ENCODE measurements at regions of chr10 and their contacts with region 1.

Region 1: GRCh38 chr10:70221030-70221429 is 12.2 kb downstream of the PPA1 start:
- DNase-seq: no peak
- H3K4me3 Mint-ChIP-seq: peak overlapping the region; percentile 7
- H3K27ac Mint-ChIP-seq: peak overlapping the region; percentile 68
- H3K4me1 Mint-ChIP-seq: peaks cover 23% of the 10 kb centered on the region
- H3K27me3 Mint-ChIP-seq: no peaks in the 10 kb centered on the region

Region 2: GRCh38 chr10:70074165-70074564 is 146.9 kb before region 1 on chr10:
- CTCF ChIA-PET with region 1: no interaction called
- POLR2A ChIA-PET with region 1: no interaction called
- DNase-seq: no peak
- H3K4me3 Mint-ChIP-seq: no peak overlapping the region
- H3K27ac Mint-ChIP-seq: no peak overlapping the region
- H3K4me1 Mint-ChIP-seq: no peaks in the 10 kb centered on the region
- H3K27me3 Mint-ChIP-seq: peaks cover 2% of the 10 kb centered on the region

Region 3: DNA sequence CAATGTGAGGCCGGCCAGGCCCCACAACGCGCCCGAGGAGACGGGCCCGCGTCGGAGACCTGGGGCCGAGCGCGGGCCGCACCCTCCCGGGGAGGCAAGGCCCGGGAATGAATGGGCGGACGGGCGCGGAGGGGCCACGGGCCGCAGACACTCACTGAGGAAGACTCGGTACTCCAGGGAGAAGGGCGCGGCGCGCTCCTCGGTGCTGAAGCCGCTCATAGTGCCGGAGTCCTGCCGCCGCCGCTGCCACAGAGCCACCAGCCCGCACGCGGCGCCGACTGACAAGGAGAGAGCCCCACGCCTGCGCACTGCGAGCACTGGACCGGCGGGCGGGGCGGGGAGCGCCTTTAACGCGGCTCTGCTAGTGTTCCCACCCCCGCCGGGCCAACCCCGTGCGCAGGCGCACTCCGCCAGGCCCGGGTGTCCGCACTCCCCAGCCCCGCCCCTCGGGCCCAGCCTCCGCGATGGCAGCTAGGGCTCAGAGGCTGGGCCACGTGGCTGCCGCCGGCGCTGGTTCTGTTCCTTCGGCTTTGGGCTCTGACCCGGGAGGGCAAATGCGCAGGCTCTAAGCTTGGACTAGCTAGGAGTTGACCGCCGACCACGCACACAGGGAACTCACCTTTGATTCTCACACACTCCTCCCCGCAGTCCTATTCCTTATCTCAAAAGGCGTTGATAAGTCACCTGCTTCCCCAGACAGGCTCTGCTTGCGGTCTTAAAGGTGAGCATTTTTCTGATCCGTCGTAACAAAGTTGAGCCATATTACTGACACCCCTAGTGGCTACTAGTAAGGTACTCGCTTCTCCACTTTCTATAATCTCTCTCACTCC is 12.3 kb after region 1 on chr10 and contains the start of gene PPA1:
- CTCF ChIA-PET with region 1: interaction called, 23 read pairs
- POLR2A ChIA-PET with region 1: no interaction called
- DNase-seq: peak; percentile 99
- H3K4me3 Mint-ChIP-seq: peak within 1 kb of the TSS; percentile 75
- H3K27ac Mint-ChIP-seq: peak within 1 kb of the TSS; percentile 92
- H3K4me1 Mint-ChIP-seq: peaks cover 46% of the 10 kb centered on the region
- H3K27me3 Mint-ChIP-seq: no peaks in the 10 kb centered on the region
- total RNA-seq, gene PPA1: 124 to 132 TPM

Region 4: DNA sequence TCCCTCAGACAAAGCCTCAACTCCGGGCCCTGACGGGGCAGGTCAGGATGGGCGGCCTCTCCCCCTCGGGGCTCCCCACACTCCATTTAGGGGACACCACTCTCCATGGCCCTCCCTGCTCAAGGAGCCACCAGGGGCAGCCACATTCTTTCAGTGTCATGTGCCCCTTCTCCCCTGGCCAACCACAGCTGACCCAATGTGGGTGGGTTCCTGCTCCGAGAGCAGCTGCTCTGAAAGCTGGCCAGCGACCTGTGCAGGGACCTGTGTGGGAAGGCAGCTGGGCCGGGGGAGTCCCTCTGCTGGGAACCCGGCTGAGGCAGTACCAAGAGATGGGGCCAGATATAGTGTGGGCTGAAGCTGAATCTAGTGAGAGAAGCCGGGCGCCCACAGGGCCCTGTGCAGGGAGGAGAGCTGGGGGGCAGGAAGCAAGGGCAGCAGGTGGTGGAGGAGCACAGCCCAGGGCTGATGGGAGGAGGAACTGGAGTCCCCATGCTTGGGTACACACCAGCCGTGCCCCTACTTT is 103.4 kb after region 1 on chr10:
- CTCF ChIA-PET with region 1: no interaction called
- POLR2A ChIA-PET with region 1: no interaction called
- DNase-seq: no peak
- H3K4me3 Mint-ChIP-seq: no peak overlapping the region
- H3K27ac Mint-ChIP-seq: peak overlapping the region; percentile 73
- H3K4me1 Mint-ChIP-seq: peaks cover 35% of the 10 kb centered on the region
- H3K27me3 Mint-ChIP-seq: no peaks in the 10 kb centered on the region

Region 5: DNA sequence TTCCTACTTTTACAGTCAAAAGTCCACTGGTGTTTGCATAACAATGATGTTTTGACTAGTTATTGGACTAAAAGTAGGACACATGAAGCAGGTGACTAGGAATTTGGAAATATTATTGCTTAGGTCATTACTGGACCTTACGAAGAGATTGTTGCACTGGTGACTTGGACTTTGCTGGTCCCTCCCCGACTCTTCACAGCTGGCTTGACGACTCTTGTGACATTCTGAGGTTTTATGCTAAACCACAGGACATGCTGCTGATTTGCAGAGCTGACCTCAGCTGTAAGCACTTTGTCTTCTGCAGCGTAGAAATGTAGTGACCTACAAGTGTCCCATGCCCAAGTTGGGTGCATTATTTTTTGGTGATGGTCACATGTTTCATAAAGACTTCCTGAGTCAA is 645.4 kb after region 1 on chr10:
- CTCF ChIA-PET with region 1: no interaction called
- POLR2A ChIA-PET with region 1: no interaction called
- DNase-seq: no peak
- H3K4me3 Mint-ChIP-seq: no peak overlapping the region
- H3K27ac Mint-ChIP-seq: no peak overlapping the region
- H3K4me1 Mint-ChIP-seq: peaks cover 6% of the 10 kb centered on the region
- H3K27me3 Mint-ChIP-seq: no peaks in the 10 kb centered on the region

Measured in activated CD4-positive, alpha-beta T cell treated with anti-CD3 and anti-CD28 coated beads, Interleukin-2, amount 10 ng/mL, durations not matched to agents 7 days and 5 days (primary cell).